ENCODE measurements at regions of chr16 and their contacts with region 1.

Region 1: DNA sequence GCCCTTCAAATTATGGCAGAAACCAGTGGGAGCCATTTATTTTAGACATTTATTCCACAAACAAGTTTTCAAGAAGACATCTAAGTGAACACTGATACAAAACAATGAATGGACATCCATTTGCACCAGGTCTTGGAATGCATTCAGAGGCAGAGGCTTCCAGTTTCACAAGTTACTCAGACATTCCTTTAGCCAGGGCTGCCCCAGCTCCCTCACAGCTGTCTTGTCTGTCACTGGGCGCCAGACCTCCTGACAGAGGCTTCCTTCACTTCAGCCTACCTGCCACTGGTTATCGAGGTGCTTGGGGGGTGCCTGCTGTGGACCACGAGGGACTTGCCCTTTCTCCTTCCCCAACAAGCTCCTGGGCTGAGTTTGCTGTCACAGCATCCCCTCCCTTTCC is 19.2 kb downstream of the AQP8 start:
- DNase-seq: no peak
- ATAC-seq: no peak
- H3K4me3 Mint-ChIP-seq: no peak overlapping the region
- H3K27ac Mint-ChIP-seq: no peak overlapping the region
- H3K4me1 Mint-ChIP-seq: no peaks in the 10 kb centered on the region
- H3K27me3 Mint-ChIP-seq: no peaks in the 10 kb centered on the region
- CTCF ChIP-seq: no peak

Region 2: GRCh38 chr16:25093208-25094061 is 142.6 kb before region 1 on chr16:
- CTCF ChIA-PET with region 1: no interaction called
- POLR2A ChIA-PET with region 1: no interaction called
- intact Hi-C with region 1: no loop called
- DNase-seq: peak; percentile 31
- ATAC-seq: peak; percentile 72
- H3K4me3 Mint-ChIP-seq: peak overlapping the region; percentile 49
- H3K27ac Mint-ChIP-seq: peak overlapping the region; percentile 93
- H3K4me1 Mint-ChIP-seq: peaks cover 27% of the 10 kb centered on the region
- H3K27me3 Mint-ChIP-seq: no peaks in the 10 kb centered on the region
- CTCF ChIP-seq: no peak

Region 3: DNA sequence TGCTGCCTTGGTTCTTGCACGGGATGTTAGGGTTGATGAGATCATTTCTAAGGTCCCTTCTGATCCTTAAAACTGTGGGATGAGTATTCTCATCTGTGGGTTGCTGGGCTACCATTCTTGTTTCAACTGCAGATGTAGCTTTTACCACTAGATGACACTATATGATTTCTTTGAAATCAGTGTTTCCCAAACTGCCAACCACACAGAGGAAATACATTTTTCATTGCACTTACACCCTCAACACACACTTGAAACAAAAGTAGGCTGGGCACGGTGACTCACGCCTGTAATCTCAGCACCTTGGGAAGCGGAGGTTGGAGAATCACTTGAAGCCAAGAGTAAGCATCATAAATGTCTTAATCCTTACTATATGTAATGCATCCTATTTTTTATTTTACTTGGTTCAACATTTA is 109.2 kb before region 1 on chr16:
- CTCF ChIA-PET with region 1: interaction called, 11 read pairs
- POLR2A ChIA-PET with region 1: no interaction called
- intact Hi-C with region 1: no loop called
- DNase-seq: peak; percentile 66
- ATAC-seq: peak; percentile 86
- H3K4me3 Mint-ChIP-seq: no peak overlapping the region
- H3K27ac Mint-ChIP-seq: no peak overlapping the region
- H3K4me1 Mint-ChIP-seq: peaks cover 31% of the 10 kb centered on the region
- H3K27me3 Mint-ChIP-seq: no peaks in the 10 kb centered on the region
- CTCF ChIP-seq: peak; percentile 77

Measured in activated CD8-positive, alpha-beta T cell treated with anti-CD3 and anti-CD28 coated beads for 36 hours (primary cell).